SK-MEL-5 (cell line): ENCODE measurements at regions of chr12 and their contacts with region 1.

Region 1: GRCh38 chr12:13472690-13473089 is 276.2 kb downstream of the EMP1 start:
- DNase-seq: no peak

Region 2: DNA sequence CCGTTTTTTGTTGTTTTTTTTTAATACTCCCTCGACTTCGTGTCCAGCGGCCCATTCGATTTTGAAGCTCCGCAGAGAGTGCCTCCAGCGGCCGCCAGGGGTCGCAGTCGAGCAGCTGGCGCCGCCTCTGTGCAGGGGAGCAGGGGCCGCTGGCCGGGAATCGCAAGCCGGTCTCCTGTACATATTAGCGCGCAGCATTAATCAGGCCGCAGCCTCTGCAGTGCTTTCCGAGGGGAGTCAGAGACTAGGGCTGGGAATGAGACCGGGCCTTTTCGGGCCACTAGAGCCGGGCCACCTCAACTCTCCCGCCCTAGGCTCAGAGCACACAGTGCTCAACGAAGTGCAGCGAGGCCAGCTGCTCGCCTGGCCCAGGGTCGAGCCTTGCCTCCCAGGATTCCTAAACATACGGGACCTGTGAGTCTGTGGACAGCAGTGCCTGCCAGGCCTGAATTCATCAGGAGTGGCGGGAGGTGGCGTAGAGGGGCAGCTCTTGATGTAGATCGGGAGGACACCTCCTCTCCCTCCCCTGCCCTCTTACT is 194.4 kb before region 1 on chr12:
- in situ Hi-C with region 1: loop called (anchors 25 kb)
- DNase-seq: peak; percentile 59